ENCODE measurements at regions of chr18 and their contacts with region 1.

Region 1: GRCh38 chr18:1585879-1586488 is 681.3 kb downstream of the ADCYAP1 start:
- DNase-seq: peak; percentile 20 to 43 (median 28)
- ATAC-seq: peak; percentile 86
- H3K4me3 ChIP-seq: no peak overlapping the region
- H3K27ac ChIP-seq: no peak overlapping the region
- H3K4me1 ChIP-seq: no peaks in the 10 kb centered on the region
- H3K27me3 ChIP-seq: no peaks in the 10 kb centered on the region
- CTCF ChIP-seq: peak; percentile 24 to 64 (median 60); a peak in 5 of 6 replicates
- EP300 ChIP-seq: no peak
- POLR2A ChIP-seq: no peak
- RAD21 ChIP-seq: peak; percentile 50 to 63

Region 2: GRCh38 chr18:1513519-1513918 is 72.5 kb before region 1 on chr18:
- CTCF ChIA-PET with region 1: no interaction called
- POLR2A ChIA-PET with region 1: no interaction called
- in situ Hi-C with region 1: no loop called
- intact Hi-C with region 1: no loop called
- DNase-seq: peak; percentile 17 to 55 (median 33)
- ATAC-seq: peak; percentile 30; the same call in 2 of the 3 replicates
- H3K4me3 ChIP-seq: no peak overlapping the region
- H3K27ac ChIP-seq: no peak overlapping the region
- H3K4me1 ChIP-seq: peaks cover 14 to 19% of the 10 kb centered on the region in 2 experiments
- H3K27me3 ChIP-seq: no peaks in the 10 kb centered on the region
- CTCF ChIP-seq: peak in 2 of 3 experiments; percentile 40 to 65; a peak in 3 of 6 replicates
- EP300 ChIP-seq: peak; percentile 67
- POLR2A ChIP-seq: no peak
- RAD21 ChIP-seq: peak; percentile 67 to 70

Region 3: DNA sequence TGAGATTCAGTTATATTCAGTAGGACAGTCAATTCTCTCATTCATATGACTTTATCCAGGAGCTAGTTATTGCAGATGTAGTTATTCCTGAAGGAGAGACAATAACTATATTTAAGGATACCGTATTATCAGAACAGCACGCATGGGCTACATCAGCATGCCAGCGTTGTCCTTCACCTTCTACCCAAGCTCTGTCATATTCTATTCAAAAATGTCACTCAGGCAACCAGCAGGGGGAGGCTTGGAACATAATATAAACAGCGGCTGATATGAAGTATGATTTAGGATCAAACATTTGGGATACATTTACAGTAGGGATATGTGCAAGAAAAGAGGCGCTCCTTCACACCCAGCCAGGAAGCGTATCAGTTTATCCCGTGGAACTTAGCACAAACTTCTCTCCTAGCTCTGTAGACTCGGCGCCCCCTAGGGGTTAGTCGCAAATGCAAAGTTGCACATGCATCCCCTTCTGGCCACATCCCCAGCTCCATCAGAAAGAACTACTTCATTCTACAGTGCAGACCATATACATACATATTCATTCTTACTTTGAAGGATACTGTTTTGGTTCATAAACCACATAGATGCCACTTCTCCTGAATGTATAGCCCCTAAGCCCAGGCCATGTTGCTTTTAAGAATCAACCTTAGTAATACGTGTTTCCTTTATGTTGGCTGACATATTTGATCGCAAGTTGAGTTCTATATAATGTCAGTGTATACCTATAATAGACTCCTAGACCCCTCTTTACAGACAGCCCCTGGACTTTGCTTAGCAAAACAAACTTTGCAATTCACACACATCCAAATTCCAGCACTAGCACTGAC is 78.1 kb after region 1 on chr18:
- CTCF ChIA-PET with region 1: no interaction called
- POLR2A ChIA-PET with region 1: no interaction called
- in situ Hi-C with region 1: no loop called
- intact Hi-C with region 1: loop called (anchors 5 kb)
- DNase-seq: peak; percentile 35 to 77 (median 48)
- ATAC-seq: peak; percentile 97
- H3K4me3 ChIP-seq: no peak overlapping the region
- H3K27ac ChIP-seq: no peak overlapping the region
- H3K4me1 ChIP-seq: no peaks in the 10 kb centered on the region
- H3K27me3 ChIP-seq: no peaks in the 10 kb centered on the region
- CTCF ChIP-seq: peak; percentile 93 to 98 (median 96)
- EP300 ChIP-seq: no peak
- POLR2A ChIP-seq: no peak
- RAD21 ChIP-seq: peak; percentile 81 to 83

Region 4: DNA sequence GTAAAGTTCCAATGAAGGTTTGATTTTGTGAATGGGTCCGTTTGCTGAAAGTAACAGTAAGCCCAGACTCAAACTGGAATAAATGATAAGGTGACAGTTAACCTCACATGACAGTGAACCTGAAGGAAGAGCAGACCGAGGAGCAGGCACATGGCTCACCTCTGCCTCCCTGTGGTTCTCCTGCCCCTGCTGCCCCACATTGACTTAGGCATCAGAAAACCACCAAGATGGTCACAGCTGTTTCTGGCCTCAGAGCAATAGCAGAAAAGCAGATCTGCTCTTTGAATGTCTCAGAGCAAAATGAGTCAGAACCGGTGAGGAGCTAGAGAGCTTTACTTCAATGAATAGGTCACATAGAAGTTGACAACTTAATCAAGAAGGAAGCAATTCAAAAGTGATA is 497.7 kb after region 1 on chr18:
- CTCF ChIA-PET with region 1: no interaction called
- POLR2A ChIA-PET with region 1: no interaction called
- in situ Hi-C with region 1: no loop called
- intact Hi-C with region 1: loop called (anchors 10 kb)
- DNase-seq: peak in 2 of 4 experiments; percentile 21 to 54
- ATAC-seq: peak; percentile 87
- H3K4me3 ChIP-seq: no peak overlapping the region
- H3K27ac ChIP-seq: no peak overlapping the region
- H3K4me1 ChIP-seq: no peaks in the 10 kb centered on the region
- H3K27me3 ChIP-seq: no peaks in the 10 kb centered on the region
- CTCF ChIP-seq: peak; percentile 54 to 78 (median 74)
- EP300 ChIP-seq: no peak
- POLR2A ChIP-seq: no peak
- RAD21 ChIP-seq: peak; percentile 75 to 78

Measured in K562 (cell line).